Activated B cell treated with CpG ODN at 0.5 μM for 24 hours (primary cell): ENCODE measurements at regions of chr7 and their contacts with region 1.

Region 1: GRCh38 chr7:28239823-28240204 is 59.2 kb upstream of the JAZF1 start:
- DNase-seq: peak; percentile 18
- ATAC-seq: peak; percentile 86
- H3K4me3 Mint-ChIP-seq: peak overlapping the region; percentile 17
- H3K27ac Mint-ChIP-seq: no peak overlapping the region
- H3K4me1 Mint-ChIP-seq: peaks cover 9% of the 10 kb centered on the region
- H3K27me3 Mint-ChIP-seq: no peaks in the 10 kb centered on the region
- CTCF ChIP-seq: no peak

Region 2: GRCh38 chr7:28219793-28220192 is 20.0 kb before region 1 on chr7:
- CTCF ChIA-PET with region 1: no interaction called
- POLR2A ChIA-PET with region 1: interaction called, 4 read pairs
- intact Hi-C with region 1: loop called (anchors 2 kb)
- DNase-seq: no peak
- ATAC-seq: no peak
- H3K4me3 Mint-ChIP-seq: no peak overlapping the region
- H3K27ac Mint-ChIP-seq: no peak overlapping the region
- H3K4me1 Mint-ChIP-seq: no peaks in the 10 kb centered on the region
- H3K27me3 Mint-ChIP-seq: no peaks in the 10 kb centered on the region
- CTCF ChIP-seq: no peak